Ovary (tissue), 10 donors: ENCODE measurements at regions of chr15 and their contacts with region 1.

Region 1: GRCh38 chr15:71114896-71115554 is at the start of gene THSD4:
- DNase-seq: peak; percentile 56 to 84 (median 67)
- H3K4me3 ChIP-seq: peak within 1 kb of the TSS; percentile 51
- H3K27ac ChIP-seq: no peak within 1 kb of the TSS
- H3K4me1 ChIP-seq: no peaks in the 10 kb centered on the region
- H3K27me3 ChIP-seq: no peaks in the 10 kb centered on the region
- CTCF ChIP-seq: peak; percentile 42 to 92 (median 86)
- EP300 ChIP-seq: no peak
- POLR2A ChIP-seq: no peak
- total RNA-seq, gene THSD4: 3.2 to 53.4 (median 13.5) TPM

Region 2: GRCh38 chr15:71386448-71387236 is 271.6 kb after region 1 on chr15:
- intact Hi-C with region 1: loop called in 1 of 4 experiments (anchors 10 kb)
- DNase-seq: no peak
- H3K4me3 ChIP-seq: no peak overlapping the region
- H3K27ac ChIP-seq: no peak overlapping the region
- H3K4me1 ChIP-seq: no peaks in the 10 kb centered on the region
- H3K27me3 ChIP-seq: no peaks in the 10 kb centered on the region
- CTCF ChIP-seq: peak in 2 of 3 donors; percentile 59
- EP300 ChIP-seq: no peak
- POLR2A ChIP-seq: no peak

Region 3: GRCh38 chr15:71437404-71438318 is 322.6 kb after region 1 on chr15:
- intact Hi-C with region 1: loop called in 2 of 4 experiments (anchors 5 to 10 kb)
- DNase-seq: no peak
- H3K4me3 ChIP-seq: no peak overlapping the region
- H3K27ac ChIP-seq: no peak overlapping the region
- H3K4me1 ChIP-seq: no peaks in the 10 kb centered on the region
- H3K27me3 ChIP-seq: no peaks in the 10 kb centered on the region
- CTCF ChIP-seq: no peak
- EP300 ChIP-seq: no peak
- POLR2A ChIP-seq: no peak